CD4-positive, alpha-beta T cell (primary cell): ENCODE measurements at regions of chr14 and their contacts with region 1.

Region 1: DNA sequence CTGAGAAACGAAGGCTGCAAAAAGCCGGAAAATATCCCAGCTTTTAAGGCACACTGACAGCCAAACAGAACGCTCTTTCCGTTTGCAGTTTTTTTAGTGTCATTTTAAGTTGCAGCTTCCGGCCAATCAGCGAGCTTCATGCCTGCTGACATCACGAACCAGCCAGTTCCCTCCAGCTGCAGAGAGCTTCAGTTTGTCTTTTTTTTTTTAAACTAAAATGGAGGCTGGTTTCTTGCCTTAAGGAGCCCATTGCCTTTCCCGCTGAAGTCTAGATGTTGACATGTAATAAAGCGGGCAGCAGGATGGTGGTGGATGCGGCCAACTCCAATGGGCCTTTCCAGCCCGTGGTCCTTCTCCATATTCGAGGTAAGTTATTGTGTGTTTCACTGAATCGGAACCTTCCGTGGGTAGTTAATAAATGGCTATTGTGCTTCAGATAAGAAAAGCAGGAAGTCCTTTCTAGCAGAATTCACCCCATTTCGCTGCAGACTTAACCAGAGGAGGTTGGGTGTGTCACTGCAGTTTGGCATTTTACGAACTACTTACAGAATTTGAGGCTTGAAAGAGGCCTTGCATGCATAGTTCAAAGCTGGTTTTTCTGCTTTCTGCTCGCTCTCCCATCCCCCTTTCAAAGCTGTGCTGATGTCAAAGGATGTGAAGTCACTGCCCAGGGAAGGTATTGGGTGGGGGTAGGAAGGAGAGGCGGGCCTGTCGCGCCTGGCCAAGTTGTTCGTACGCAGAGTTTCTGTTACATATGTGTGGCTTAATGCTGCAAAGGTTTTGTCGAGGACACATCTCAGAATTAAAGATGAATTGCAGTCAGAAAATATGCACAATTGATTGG is 48.4 kb downstream of the PPP2R5C start:
- DNase-seq: peak; percentile 73 to 97 (median 81)
- ATAC-seq: peak; percentile 84
- H3K4me3 ChIP-seq: peak overlapping the region; percentile 79
- H3K4me3 Mint-ChIP-seq: peak overlapping the region; percentile 94
- H3K27ac ChIP-seq: peak overlapping the region; percentile 99
- H3K27ac Mint-ChIP-seq: peak overlapping the region; percentile 98
- H3K4me1 ChIP-seq: peaks cover 39% of the 10 kb centered on the region
- H3K4me1 Mint-ChIP-seq: peaks cover 56% of the 10 kb centered on the region
- H3K27me3 ChIP-seq: no peaks in the 10 kb centered on the region
- H3K27me3 Mint-ChIP-seq: no peaks in the 10 kb centered on the region
- CTCF ChIP-seq: no peak

Region 2: DNA sequence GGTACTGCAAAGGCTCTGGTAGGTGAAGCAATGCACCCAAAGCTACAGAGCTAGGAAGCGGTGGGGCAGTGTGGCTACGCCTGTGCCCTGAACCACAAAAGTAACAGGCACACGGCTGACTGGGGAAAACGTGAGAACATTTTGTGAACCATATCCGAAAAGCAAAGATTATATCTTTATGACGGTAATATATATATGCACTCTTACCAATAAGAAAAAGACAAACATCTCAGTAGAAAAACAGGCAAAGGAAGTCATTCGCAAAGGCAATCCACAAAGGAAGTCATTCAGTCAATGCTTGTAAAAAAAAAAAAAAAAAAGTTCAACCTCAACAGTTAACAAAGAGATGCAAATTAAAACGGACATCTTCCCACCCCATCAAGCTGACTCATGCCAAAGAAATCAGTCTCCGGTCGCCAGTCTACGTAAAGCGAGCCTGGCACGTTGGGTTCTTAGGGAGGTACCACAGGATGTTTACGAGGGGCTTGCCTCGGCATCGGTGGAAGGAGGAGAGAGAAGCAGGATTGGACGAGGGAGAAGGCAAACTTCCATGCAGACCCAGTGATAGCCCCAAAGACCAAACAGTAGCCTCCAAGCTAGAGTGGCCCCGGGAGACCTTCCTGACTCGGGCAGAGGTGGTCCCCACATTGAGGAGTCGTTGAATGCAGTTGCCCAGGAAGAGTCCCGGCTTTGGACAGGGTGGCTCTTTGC is 87.8 kb before region 1 on chr14:
- CTCF ChIA-PET with region 1: no interaction called
- POLR2A ChIA-PET with region 1: interaction called, 16 read pairs
- intact Hi-C with region 1: loop called in 1 of 2 experiments (anchors 1 kb)
- DNase-seq: peak; percentile 65 to 95 (median 77)
- ATAC-seq: peak; percentile 77
- H3K4me3 ChIP-seq: peak overlapping the region; percentile 31
- H3K4me3 Mint-ChIP-seq: peak overlapping the region; percentile 70
- H3K27ac ChIP-seq: peak overlapping the region; percentile 84 to 87
- H3K27ac Mint-ChIP-seq: peak overlapping the region; percentile 95
- H3K4me1 ChIP-seq: peaks cover 61% of the 10 kb centered on the region
- H3K4me1 Mint-ChIP-seq: peaks cover 61% of the 10 kb centered on the region
- H3K27me3 ChIP-seq: no peaks in the 10 kb centered on the region
- H3K27me3 Mint-ChIP-seq: no peaks in the 10 kb centered on the region
- CTCF ChIP-seq: no peak

Region 3: DNA sequence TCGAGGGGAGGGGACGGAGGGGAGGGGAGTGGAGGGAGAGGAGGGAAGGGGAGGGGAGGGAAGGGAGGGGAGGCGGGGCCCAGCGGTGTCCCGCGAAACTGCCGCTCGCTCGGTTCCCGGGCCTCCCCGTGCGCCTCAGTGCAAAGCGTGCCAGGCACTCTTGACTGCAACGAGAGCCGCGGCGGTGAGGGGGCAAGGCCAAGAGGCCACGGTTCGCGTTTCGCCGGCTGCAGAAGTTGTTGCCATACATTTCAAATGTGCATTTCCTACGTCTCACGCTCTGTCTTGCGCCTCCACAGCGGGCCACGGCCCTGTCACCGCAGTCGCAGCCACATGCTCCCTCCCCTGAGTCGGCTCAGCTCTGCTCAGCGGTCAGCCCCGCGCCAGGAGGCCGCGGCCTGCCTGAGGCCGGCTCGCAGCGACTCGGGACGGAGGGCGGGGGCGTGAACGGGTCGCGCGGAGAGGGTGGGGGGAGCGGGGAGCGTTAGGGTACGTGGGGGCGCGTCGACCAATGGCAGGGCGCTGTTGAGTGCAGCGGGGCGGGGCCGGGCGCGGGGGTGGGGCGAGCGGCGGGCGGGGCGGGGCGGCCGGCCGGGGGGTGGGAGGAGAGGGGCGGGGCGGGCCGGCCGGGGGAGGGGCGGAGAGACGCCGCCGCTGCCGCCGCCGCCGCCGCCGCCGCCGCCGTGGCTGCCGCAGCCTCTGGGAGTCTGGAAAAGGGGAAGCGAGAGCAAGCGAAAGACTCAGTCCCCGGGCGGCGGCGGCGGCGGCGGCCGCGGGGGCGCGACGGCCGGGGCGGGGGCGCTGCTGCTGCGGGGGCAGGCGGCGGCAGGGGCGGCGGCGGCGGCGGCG is 48.6 kb before region 1 on chr14 and contains the start of gene PPP2R5C:
- CTCF ChIA-PET with region 1: interaction called, 4 read pairs
- POLR2A ChIA-PET with region 1: interaction called, 29 read pairs
- intact Hi-C with region 1: loop called (anchors 2 kb)
- DNase-seq: peak; percentile 78 to 94 (median 86)
- ATAC-seq: peak; percentile 60
- H3K4me3 ChIP-seq: peak within 1 kb of the TSS; percentile 97
- H3K4me3 Mint-ChIP-seq: peak within 1 kb of the TSS; percentile 97
- H3K27ac ChIP-seq: peak within 1 kb of the TSS; percentile 79
- H3K27ac Mint-ChIP-seq: peak within 1 kb of the TSS; percentile 91
- H3K4me1 ChIP-seq: peaks cover 30% of the 10 kb centered on the region
- H3K4me1 Mint-ChIP-seq: peaks cover 43% of the 10 kb centered on the region
- H3K27me3 ChIP-seq: no peaks in the 10 kb centered on the region
- H3K27me3 Mint-ChIP-seq: no peaks in the 10 kb centered on the region
- CTCF ChIP-seq: no peak
- total RNA-seq, gene PPP2R5C: 463 to 487 TPM

Region 4: GRCh38 chr14:101797856-101798255 is 12.0 kb before region 1 on chr14:
- CTCF ChIA-PET with region 1: interaction called, 4 read pairs
- POLR2A ChIA-PET with region 1: interaction called, 68 read pairs
- intact Hi-C with region 1: loop called in 1 of 2 experiments (anchors 2 kb)
- DNase-seq: no peak
- ATAC-seq: no peak
- H3K4me3 ChIP-seq: no peak overlapping the region
- H3K4me3 Mint-ChIP-seq: no peak overlapping the region
- H3K27ac ChIP-seq: no peak overlapping the region
- H3K27ac Mint-ChIP-seq: no peak overlapping the region
- H3K4me1 ChIP-seq: peaks cover 6% of the 10 kb centered on the region
- H3K4me1 Mint-ChIP-seq: peaks cover 10% of the 10 kb centered on the region
- H3K27me3 ChIP-seq: no peaks in the 10 kb centered on the region
- H3K27me3 Mint-ChIP-seq: no peaks in the 10 kb centered on the region
- CTCF ChIP-seq: no peak

Region 5: GRCh38 chr14:101834800-101835547 is 25.1 kb after region 1 on chr14:
- CTCF ChIA-PET with region 1: no interaction called
- POLR2A ChIA-PET with region 1: interaction called, 697 read pairs
- intact Hi-C with region 1: no loop called
- DNase-seq: no peak
- ATAC-seq: no peak
- H3K4me3 ChIP-seq: no peak overlapping the region
- H3K4me3 Mint-ChIP-seq: peak overlapping the region; percentile 34
- H3K27ac ChIP-seq: peak overlapping the region; percentile 1 to 14
- H3K27ac Mint-ChIP-seq: peak overlapping the region; percentile 87
- H3K4me1 ChIP-seq: peaks cover 90% of the 10 kb centered on the region
- H3K4me1 Mint-ChIP-seq: peaks cover 92% of the 10 kb centered on the region
- H3K27me3 ChIP-seq: no peaks in the 10 kb centered on the region
- H3K27me3 Mint-ChIP-seq: no peaks in the 10 kb centered on the region
- CTCF ChIP-seq: no peak

Region 6: GRCh38 chr14:101849125-101849524 is 39.2 kb after region 1 on chr14:
- CTCF ChIA-PET with region 1: interaction called, 8 read pairs
- POLR2A ChIA-PET with region 1: interaction called, 15 read pairs
- intact Hi-C with region 1: loop called in 1 of 2 experiments (anchors 5 kb)
- DNase-seq: no peak
- ATAC-seq: no peak
- H3K4me3 ChIP-seq: no peak overlapping the region
- H3K4me3 Mint-ChIP-seq: peak overlapping the region; percentile 23
- H3K27ac ChIP-seq: no peak overlapping the region
- H3K27ac Mint-ChIP-seq: peak overlapping the region; percentile 78
- H3K4me1 ChIP-seq: peaks cover 75% of the 10 kb centered on the region
- H3K4me1 Mint-ChIP-seq: peaks cover 91% of the 10 kb centered on the region
- H3K27me3 ChIP-seq: no peaks in the 10 kb centered on the region
- H3K27me3 Mint-ChIP-seq: no peaks in the 10 kb centered on the region
- CTCF ChIP-seq: no peak

Region 7: DNA sequence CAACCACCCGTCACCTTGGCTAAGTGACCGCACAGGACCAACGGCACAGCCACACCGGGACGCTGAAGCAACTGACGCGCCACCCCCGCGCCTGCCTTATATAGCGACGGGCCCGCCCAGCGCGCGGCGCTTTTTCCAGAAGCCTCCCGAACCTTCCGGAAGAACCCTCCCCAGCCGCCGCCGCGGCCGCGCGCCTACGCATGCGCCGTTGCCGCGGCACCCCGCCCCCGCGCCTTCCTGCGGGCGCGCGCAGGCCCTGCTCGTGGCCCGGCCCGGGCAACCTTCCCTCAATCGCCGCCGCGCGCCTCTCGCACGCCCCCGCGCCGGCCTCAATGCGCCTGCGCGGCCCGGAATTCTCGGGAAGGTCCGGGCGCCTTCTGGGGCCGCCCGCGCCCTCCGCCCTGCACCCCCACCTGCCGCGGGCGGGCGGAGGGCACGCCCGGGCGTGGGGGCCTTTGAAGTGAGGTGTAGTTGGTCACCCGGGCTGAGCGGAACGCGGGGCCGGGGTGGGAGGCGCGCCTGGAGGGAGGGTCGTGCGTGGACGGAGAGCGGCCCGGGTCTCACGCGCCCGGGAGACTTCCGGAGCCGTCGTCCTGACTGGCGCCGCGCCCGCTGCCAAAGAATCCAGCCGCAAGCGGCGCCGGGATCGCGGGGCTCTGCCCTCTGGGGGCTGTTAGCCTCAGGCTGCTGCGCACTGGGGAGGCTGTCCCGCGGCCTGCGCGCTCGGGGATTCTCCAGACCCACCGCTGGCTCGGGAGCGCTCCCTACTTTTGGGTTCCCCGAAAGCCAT is 277.3 kb after region 1 on chr14 and contains the start of gene HSP90AA1:
- CTCF ChIA-PET with region 1: no interaction called
- POLR2A ChIA-PET with region 1: no interaction called
- intact Hi-C with region 1: loop called in 1 of 2 experiments (anchors 10 kb)
- DNase-seq: peak; percentile 88 to 98 (median 94)
- ATAC-seq: peak; percentile 77
- H3K4me3 ChIP-seq: peak within 1 kb of the TSS; percentile 74
- H3K4me3 Mint-ChIP-seq: peak within 1 kb of the TSS; percentile 98
- H3K27ac ChIP-seq: peak within 1 kb of the TSS; percentile 95 to 98
- H3K27ac Mint-ChIP-seq: peak within 1 kb of the TSS; percentile 91
- H3K4me1 ChIP-seq: peaks cover 51% of the 10 kb centered on the region
- H3K4me1 Mint-ChIP-seq: peaks cover 64% of the 10 kb centered on the region
- H3K27me3 ChIP-seq: no peaks in the 10 kb centered on the region
- H3K27me3 Mint-ChIP-seq: no peaks in the 10 kb centered on the region
- CTCF ChIP-seq: no peak
- total RNA-seq, gene HSP90AA1: 451 to 462 TPM

Region 8: GRCh38 chr14:102187058-102187457 is 377.2 kb after region 1 on chr14:
- CTCF ChIA-PET with region 1: no interaction called
- POLR2A ChIA-PET with region 1: no interaction called
- intact Hi-C with region 1: no loop called
- DNase-seq: no peak
- ATAC-seq: no peak
- H3K4me3 ChIP-seq: no peak overlapping the region
- H3K4me3 Mint-ChIP-seq: no peak overlapping the region
- H3K27ac ChIP-seq: no peak overlapping the region
- H3K27ac Mint-ChIP-seq: peak overlapping the region; percentile 28
- H3K4me1 ChIP-seq: peaks cover 23% of the 10 kb centered on the region
- H3K4me1 Mint-ChIP-seq: peaks cover 63% of the 10 kb centered on the region
- H3K27me3 ChIP-seq: no peaks in the 10 kb centered on the region
- H3K27me3 Mint-ChIP-seq: no peaks in the 10 kb centered on the region
- CTCF ChIP-seq: no peak